ENCODE measurements at regions of chr3 and their contacts with region 1.

Region 1: GRCh38 chr3:13245615-13245978 is 172.4 kb upstream of the IQSEC1 start:
- DNase-seq: no peak
- H3K4me3 ChIP-seq: no peak overlapping the region
- H3K27ac ChIP-seq: no peak overlapping the region
- H3K4me1 ChIP-seq: peaks cover 0 to 35% of the 10 kb centered on the region in 2 experiments; a peak in 2 of 4 replicates
- H3K27me3 ChIP-seq: no peaks in the 10 kb centered on the region
- CTCF ChIP-seq: no peak
- EP300 ChIP-seq: no peak
- RAD21 ChIP-seq: no peak

Region 2: GRCh38 chr3:13229273-13229949 is 16.2 kb before region 1 on chr3:
- CTCF ChIA-PET with region 1: interaction called, 30 read pairs
- POLR2A ChIA-PET with region 1: no interaction called
- DNase-seq: peak; percentile 71
- H3K4me3 ChIP-seq: no peak overlapping the region
- H3K27ac ChIP-seq: no peak overlapping the region
- H3K4me1 ChIP-seq: no peaks in the 10 kb centered on the region
- H3K27me3 ChIP-seq: no peaks in the 10 kb centered on the region; the same call in 1 of the 2 replicates
- CTCF ChIP-seq: peak; percentile 36; the same call in 1 of the 2 replicates
- EP300 ChIP-seq: no peak
- RAD21 ChIP-seq: peak; percentile 60

Region 3: GRCh38 chr3:13260259-13261103 is 14.9 kb after region 1 on chr3:
- CTCF ChIA-PET with region 1: interaction called, 17 read pairs
- POLR2A ChIA-PET with region 1: interaction called, 5 read pairs
- DNase-seq: no peak
- H3K4me3 ChIP-seq: no peak overlapping the region
- H3K27ac ChIP-seq: no peak overlapping the region
- H3K4me1 ChIP-seq: peaks cover 0 to 36% of the 10 kb centered on the region in 2 experiments; a peak in 1 of 4 replicates
- H3K27me3 ChIP-seq: no peaks in the 10 kb centered on the region
- CTCF ChIP-seq: peak; percentile 26; the same call in 1 of the 2 replicates
- EP300 ChIP-seq: no peak
- RAD21 ChIP-seq: no peak

Region 4: DNA sequence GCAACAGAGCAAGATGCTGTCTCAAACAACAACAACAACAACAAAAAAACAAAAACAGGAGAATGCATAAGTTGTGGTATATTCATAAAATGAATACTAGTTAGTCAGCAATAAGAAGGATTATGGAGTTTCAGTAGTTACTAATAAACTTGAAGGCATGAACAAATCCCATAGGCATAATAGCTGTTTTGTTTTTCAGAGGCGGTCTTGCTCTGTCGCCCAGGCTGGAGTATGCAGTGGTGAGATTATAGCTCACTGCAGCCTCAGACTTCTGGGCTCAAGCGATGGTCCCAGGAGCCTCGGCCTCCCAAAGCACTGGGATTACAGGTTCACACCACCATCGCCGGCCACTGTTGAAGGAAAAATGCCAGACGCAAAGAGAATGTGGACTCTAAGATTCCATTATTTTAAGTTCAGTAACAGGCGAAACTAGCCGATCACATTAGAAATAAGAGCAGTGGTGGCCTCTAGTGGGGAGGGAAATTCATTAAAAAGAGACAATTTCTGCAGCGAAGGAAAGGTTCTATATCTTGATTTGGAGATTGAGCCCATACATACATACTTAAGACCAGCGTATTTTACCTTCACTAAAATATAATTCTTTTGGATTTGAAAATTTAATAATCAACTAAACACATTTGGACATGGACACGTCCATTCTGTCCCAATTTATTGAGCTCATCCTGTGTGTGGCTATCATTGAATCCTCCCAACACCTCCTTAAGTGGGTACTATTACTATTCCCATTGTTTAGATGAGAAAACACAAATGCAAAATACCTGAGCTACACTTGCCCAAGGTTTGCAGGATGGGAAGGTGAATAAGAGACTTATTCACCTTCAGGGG is 207.1 kb after region 1 on chr3:
- CTCF ChIA-PET with region 1: interaction called, 12 read pairs
- POLR2A ChIA-PET with region 1: no interaction called
- DNase-seq: peak; percentile 59
- H3K4me3 ChIP-seq: peak overlapping the region; percentile 12 to 66; a peak in 3 of 4 replicates
- H3K27ac ChIP-seq: peak overlapping the region; percentile 27 to 31; a peak in 2 of 4 replicates
- H3K4me1 ChIP-seq: no peaks in the 10 kb centered on the region; a peak in 1 of 4 replicates
- H3K27me3 ChIP-seq: no peaks in the 10 kb centered on the region
- CTCF ChIP-seq: peak; percentile 75
- EP300 ChIP-seq: no peak
- RAD21 ChIP-seq: peak; percentile 82